BJ (cell line): ENCODE measurements at regions of chr1 and their contacts with region 1.

Region 1: GRCh38 chr1:42821690-42822089 is 4.5 kb upstream of the SVBP start:
- DNase-seq: no peak
- H3K4me3 ChIP-seq: no peak overlapping the region
- H3K27me3 ChIP-seq: no peaks in the 10 kb centered on the region
- CTCF ChIP-seq: no peak

Region 2: GRCh38 chr1:42784946-42785693 is 36.6 kb before region 1 on chr1 and contains the start of gene TMEM269:
- CTCF ChIA-PET with region 1: no interaction called
- POLR2A ChIA-PET with region 1: no interaction called
- DNase-seq: no peak
- H3K4me3 ChIP-seq: peak within 1 kb of the TSS; percentile 39
- H3K27me3 ChIP-seq: no peaks in the 10 kb centered on the region
- CTCF ChIP-seq: no peak
- polyA plus RNA-seq, gene TMEM269: not detected in 2 replicates

Region 3: DNA sequence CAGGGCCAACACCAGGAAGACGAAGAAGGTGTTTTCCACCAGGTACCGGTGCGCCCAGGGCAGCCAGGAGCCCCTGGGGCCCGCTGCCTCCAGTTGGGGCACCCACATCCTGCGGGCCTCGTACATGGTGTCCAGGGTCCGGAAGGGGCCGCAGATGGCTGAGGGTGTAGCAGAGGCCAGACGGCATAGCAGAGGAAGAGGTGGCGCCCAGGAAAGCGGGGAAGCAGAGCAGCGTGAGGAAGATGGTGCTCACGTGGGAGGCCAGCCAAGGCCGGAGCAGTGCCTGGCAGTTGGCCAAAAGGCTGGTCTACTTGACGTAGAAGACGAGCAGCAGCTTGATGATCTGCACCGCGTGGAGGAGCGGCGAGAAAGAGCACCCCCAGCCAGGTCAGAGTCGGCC is 65.1 kb after region 1 on chr1:
- CTCF ChIA-PET with region 1: no interaction called
- POLR2A ChIA-PET with region 1: interaction called, 10 read pairs
- DNase-seq: no peak
- H3K4me3 ChIP-seq: no peak overlapping the region
- H3K27me3 ChIP-seq: peaks cover 3% of the 10 kb centered on the region
- CTCF ChIP-seq: no peak